WTC11 (cell line): ENCODE measurements at regions of chr5 and their contacts with region 1.

Region 1: GRCh38 chr5:130871346-130872086 is 293.5 kb downstream of the HINT1 start:
- DNase-seq: peak; percentile 27
- ATAC-seq: peak; percentile 87
- H3K4me3 Mint-ChIP-seq: no peak overlapping the region
- H3K27ac Mint-ChIP-seq: peak overlapping the region; percentile 49
- H3K4me1 Mint-ChIP-seq: peaks cover 22% of the 10 kb centered on the region
- H3K27me3 Mint-ChIP-seq: no peaks in the 10 kb centered on the region
- CTCF ChIP-seq: peak; percentile 77

Region 2: DNA sequence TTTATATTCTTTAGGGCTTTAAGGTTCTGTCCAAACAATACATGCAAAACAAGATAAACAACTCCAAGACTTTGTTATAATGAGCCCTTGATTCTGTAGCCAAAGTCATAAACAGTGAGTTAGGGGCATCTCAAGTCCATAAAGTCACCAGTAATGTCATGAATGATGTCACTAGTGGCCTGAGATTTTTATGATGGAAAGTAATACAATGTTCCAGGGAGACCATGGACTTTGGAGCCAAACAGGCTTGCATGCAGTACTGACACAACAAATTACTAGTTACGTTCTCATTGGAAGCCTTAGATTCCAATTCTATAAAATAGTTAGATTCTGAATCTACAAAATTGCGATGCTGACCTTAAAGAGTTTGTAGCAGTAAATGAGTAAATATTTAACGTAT is 13.5 kb after region 1 on chr5:
- CTCF ChIA-PET with region 1: interaction called, 11 read pairs
- POLR2A ChIA-PET with region 1: no interaction called
- DNase-seq: no peak
- ATAC-seq: no peak
- H3K4me3 Mint-ChIP-seq: no peak overlapping the region
- H3K27ac Mint-ChIP-seq: no peak overlapping the region
- H3K4me1 Mint-ChIP-seq: peaks cover 15% of the 10 kb centered on the region
- H3K27me3 Mint-ChIP-seq: no peaks in the 10 kb centered on the region
- CTCF ChIP-seq: no peak

Region 3: GRCh38 chr5:130893006-130893405 is 21.5 kb after region 1 on chr5:
- CTCF ChIA-PET with region 1: interaction called, 10 read pairs
- POLR2A ChIA-PET with region 1: no interaction called
- DNase-seq: no peak
- ATAC-seq: no peak
- H3K4me3 Mint-ChIP-seq: no peak overlapping the region
- H3K27ac Mint-ChIP-seq: no peak overlapping the region
- H3K4me1 Mint-ChIP-seq: peaks cover 13% of the 10 kb centered on the region
- H3K27me3 Mint-ChIP-seq: no peaks in the 10 kb centered on the region; the same call in 1 of the 2 replicates
- CTCF ChIP-seq: no peak

Region 4: DNA sequence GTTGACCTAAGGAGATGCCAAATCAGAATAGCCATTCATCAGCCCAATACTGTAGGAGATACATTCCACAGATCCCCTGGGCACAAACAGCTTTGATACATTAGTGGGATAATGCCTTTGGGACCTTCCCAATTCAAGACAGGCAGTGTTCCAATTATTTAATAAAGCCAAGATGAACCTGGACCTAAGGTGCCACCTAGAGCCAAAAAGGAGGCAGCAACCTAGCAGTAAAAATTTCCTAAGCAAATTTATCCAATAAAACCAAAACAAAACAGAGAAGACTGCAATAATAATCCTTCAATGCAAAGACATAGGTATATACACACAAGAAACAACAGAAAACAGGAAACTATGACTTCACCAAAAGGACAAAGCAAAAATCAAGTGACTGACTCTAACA is 40.6 kb after region 1 on chr5:
- CTCF ChIA-PET with region 1: interaction called, 14 read pairs
- POLR2A ChIA-PET with region 1: no interaction called
- DNase-seq: no peak
- ATAC-seq: peak; percentile 50; the same call in 1 of the 2 replicates
- H3K4me3 Mint-ChIP-seq: no peak overlapping the region
- H3K27ac Mint-ChIP-seq: no peak overlapping the region
- H3K4me1 Mint-ChIP-seq: peaks cover 19% of the 10 kb centered on the region
- H3K27me3 Mint-ChIP-seq: no peaks in the 10 kb centered on the region
- CTCF ChIP-seq: no peak